Ovary (tissue), 10 donors: ENCODE measurements at regions of chr5 and their contacts with region 1.

Region 1: DNA sequence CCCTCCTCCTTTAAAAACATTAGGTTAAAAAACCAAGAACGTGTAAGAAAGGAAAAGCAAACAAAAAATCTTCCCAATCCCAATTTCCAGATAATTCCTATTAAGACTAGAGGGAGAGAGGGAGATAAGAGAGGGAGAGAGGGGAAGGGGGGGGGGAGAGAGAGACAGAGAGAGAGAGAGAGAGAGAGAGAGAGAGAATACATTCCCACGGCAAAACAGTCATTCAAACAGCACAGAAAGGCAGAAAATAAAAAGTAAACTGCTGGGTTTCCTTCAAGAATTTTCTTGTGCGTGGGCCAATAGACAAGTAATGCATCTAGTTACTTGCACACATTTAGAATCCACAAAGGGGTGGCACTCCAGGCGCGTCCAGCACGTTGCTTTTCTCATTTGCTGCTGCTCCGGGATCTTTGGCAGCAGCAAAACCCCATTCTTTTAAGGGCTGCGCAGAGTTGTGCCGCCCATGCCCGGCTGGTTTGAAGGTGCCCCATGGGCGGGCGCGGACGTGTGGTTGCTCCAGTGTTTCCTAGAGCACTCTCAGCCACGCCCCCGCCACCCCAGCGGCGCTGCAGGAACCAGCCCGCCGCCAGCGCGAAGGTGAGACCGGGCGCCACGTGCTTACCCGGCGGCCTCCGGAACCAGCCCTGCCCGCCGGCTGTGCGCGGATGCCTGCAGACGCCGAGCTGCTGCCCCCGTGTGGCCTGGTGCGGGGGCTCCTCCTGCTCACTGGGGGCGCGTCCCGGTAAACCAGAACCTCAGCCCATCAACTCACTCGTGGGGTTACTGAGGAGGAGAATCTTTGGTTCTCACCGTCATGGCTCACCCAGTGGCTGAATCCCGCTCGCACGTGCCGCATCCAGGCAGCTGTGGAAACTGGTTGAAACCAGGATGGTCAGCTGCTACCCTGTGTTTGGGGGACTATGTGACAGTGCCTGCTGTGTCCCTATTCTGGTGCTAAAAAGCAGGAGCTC is 44.6 kb downstream of the STC2 start:
- DNase-seq: peak; percentile 64 to 85 (median 71)
- H3K4me3 ChIP-seq: no peak overlapping the region
- H3K27ac ChIP-seq: no peak overlapping the region
- H3K4me1 ChIP-seq: no peaks in the 10 kb centered on the region
- H3K27me3 ChIP-seq: no peaks in the 10 kb centered on the region
- CTCF ChIP-seq: peak in 2 of 3 donors; percentile 56 to 77
- EP300 ChIP-seq: no peak
- POLR2A ChIP-seq: no peak

Region 2: DNA sequence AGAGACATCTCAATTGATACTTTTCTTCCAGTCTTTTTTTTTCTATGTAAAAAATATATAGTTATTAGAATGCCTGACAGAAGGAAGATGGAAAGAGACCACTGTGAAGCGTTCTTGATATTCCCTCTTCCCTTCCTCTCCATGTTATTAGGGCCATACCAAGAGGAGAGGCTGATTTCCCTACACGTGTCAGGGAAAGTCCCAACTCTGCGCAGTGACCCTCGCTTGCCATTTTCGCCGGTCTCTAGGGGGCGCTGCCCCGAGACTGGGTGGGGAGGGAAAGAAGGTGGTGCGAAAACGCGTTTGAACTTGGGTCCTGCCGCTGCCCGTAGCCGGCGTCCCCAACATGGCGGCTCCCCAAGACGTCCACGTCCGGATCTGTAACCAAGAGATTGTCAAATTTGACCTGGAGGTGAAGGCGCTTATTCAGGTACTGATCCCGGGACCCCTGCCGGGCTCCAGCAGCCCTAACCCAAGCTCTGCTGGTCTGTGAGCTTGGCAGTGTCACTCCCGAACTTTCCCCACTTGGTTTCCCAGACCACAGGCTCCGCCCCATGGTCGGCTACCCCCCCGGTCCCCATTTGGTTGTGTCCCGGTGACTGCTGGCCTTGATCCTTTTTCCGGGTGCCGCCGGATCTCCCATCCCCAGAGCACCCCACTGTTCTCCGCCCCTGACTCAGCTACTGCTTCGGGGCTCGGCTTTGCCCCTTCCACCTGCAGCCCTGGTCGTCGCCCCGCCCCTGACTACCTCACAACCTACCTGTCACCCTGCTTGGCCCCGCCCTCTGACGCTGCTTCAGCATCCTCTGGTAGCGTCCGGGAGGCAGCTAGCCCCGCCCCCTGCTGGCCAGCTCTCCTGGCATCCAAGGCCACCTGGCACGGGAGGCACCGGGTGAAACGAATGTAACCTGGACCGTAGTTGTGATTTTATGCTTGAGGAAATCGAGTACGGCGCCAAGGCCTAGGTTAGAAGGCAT is 139.1 kb before region 1 on chr5 and contains the start of gene BNIP1:
- intact Hi-C with region 1: loop called in 1 of 4 experiments (anchors 10 kb)
- DNase-seq: peak; percentile 90 to 97 (median 95)
- H3K4me3 ChIP-seq: peak within 1 kb of the TSS; percentile 74
- H3K27ac ChIP-seq: peak within 1 kb of the TSS; percentile 7 to 51
- H3K4me1 ChIP-seq: peaks cover 1% of the 10 kb centered on the region
- H3K27me3 ChIP-seq: no peaks in the 10 kb centered on the region
- CTCF ChIP-seq: peak; percentile 84 to 96 (median 91)
- EP300 ChIP-seq: no peak
- POLR2A ChIP-seq: peak; percentile 39
- total RNA-seq, gene BNIP1: 8.3 to 17.6 (median 9.5) TPM

Region 3: GRCh38 chr5:173163219-173163618 is 120.4 kb before region 1 on chr5:
- intact Hi-C with region 1: loop called in 1 of 4 experiments (anchors 5 kb)
- DNase-seq: peak; percentile 33 to 41 (median 38)
- H3K4me3 ChIP-seq: no peak overlapping the region
- H3K27ac ChIP-seq: no peak overlapping the region
- H3K4me1 ChIP-seq: no peaks in the 10 kb centered on the region
- H3K27me3 ChIP-seq: no peaks in the 10 kb centered on the region
- CTCF ChIP-seq: no peak
- EP300 ChIP-seq: no peak
- POLR2A ChIP-seq: no peak